Posterior cingulate gyrus (tissue), 11 donors: ENCODE measurements at regions of chr4 and their contacts with region 1.

Region 1: DNA sequence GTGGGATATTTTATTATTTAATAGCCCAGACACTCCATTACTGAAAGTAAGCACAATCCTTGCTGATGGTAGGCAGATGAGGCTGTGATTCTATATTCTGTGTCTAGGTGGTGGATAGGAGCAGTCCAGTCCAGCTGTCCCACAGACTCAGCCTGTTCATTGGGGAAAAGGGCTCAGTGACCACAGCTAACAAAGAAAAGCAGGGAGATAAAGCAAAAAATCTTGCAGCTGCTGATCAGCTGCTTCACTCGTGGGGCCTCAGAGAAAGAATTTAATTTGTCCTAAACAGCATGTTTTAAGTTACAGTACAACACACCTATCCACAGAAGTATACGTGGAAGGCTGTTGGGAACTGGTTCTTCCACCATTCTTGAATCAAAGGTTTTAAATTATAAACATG is 40.7 kb upstream of the ANK2 start:
- DNase-seq: peak in 1 of 10 donors; percentile 11

Region 2: GRCh38 chr4:112951362-112952312 is 57.1 kb before region 1 on chr4:
- intact Hi-C with region 1: no loop called
- DNase-seq: no peak

Region 3: GRCh38 chr4:113080050-113080449 is 71.3 kb after region 1 on chr4:
- intact Hi-C with region 1: loop called (anchors 10 kb)
- DNase-seq: peak in 1 of 10 donors; percentile 33

Region 4: DNA sequence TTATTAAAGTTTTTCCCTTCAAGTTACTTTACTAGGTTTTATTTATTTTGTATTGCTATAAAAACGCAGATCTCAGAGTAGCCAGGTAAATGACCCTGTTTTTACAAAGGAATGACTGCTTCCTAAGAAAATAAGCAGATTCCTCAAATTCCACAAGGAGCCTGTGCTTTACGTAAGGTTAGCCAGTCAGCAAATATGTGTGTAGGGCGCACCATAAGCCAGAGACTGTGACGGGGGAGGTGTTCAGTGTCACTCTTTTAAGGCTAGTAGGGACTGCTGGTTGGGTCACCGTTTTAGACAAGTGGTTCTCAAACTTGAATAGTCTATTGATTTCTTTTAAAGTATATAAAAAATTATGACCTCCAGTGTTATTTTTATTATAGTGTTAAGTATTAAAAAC is 160.7 kb after region 1 on chr4:
- intact Hi-C with region 1: no loop called
- DNase-seq: no peak